ENCODE measurements at regions of chr5 and their contacts with region 1.

Region 1: DNA sequence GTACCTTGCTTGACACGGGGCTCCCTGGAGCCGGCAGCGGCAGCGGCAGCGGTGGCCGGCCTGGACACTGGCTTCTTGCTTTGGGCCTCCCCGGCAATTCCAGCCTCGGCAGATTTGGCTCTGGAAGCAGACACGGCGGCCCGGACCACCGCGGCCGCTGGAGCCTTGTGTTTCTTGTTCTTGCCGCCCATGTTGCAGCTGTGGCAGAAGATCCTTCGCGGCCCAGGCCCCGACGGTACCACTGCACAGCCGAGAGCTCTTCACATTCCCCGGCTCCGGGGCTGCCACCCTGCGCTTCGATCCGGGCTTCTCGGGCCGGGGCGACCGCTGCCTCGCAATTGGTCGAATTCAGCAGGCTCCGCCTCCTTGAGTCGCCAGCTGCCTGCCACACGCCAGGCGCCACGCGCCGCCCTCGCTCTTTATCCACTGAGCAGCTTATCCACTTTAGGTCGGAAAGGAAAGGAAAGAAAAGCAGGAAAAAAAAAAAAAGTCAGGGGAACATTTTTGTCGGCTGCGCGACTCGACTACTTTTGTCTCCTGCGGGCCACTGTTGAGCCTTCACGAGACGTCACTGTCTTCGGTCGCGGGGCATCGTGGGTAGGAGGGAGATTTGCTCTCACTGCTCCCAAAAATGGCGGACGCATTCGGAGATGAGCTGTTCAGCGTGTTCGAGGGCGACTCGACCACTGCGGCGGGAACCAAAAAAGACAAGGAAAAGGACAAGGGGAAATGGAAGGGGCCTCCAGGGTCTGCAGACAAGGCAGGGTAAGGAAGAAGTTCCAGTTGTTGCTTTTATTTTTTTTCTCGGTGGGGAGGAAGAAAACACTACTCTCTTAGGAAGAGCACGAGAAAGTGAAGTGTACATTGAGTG is at the starts of genes DHX29 and MTREX:
- DNase-seq: peak; percentile 93 to 95
- H3K4me3 ChIP-seq: peak within 1 kb of the TSS; percentile 70
- H3K4me3 Mint-ChIP-seq: no peak within 1 kb of the TSS
- H3K27ac Mint-ChIP-seq: no peak within 1 kb of the TSS
- H3K4me1 ChIP-seq: peaks cover 22% of the 10 kb centered on the region
- H3K4me1 Mint-ChIP-seq: peaks cover 7% of the 10 kb centered on the region
- H3K27me3 ChIP-seq: no peaks in the 10 kb centered on the region
- H3K27me3 Mint-ChIP-seq: no peaks in the 10 kb centered on the region
- CTCF ChIP-seq: no peak
- total RNA-seq, gene DHX29: 27.6 and 31.6 TPM in 2 replicates
- total RNA-seq, gene MTREX: 83.7 and 95.2 TPM in 2 replicates

Region 2: GRCh38 chr5:55172051-55172899 is 135.3 kb before region 1 on chr5:
- CTCF ChIA-PET with region 1: no interaction called
- POLR2A ChIA-PET with region 1: interaction called, 7 read pairs
- intact Hi-C with region 1: loop called (anchors 5 kb)
- DNase-seq: peak; percentile 65 to 75
- H3K4me3 ChIP-seq: peak overlapping the region; percentile 50
- H3K4me3 Mint-ChIP-seq: peak overlapping the region; percentile 89
- H3K27ac Mint-ChIP-seq: no peak overlapping the region
- H3K4me1 ChIP-seq: peaks cover 11% of the 10 kb centered on the region
- H3K4me1 Mint-ChIP-seq: peaks cover 8% of the 10 kb centered on the region
- H3K27me3 ChIP-seq: peaks cover 3% of the 10 kb centered on the region
- H3K27me3 Mint-ChIP-seq: peaks cover 12% of the 10 kb centered on the region
- CTCF ChIP-seq: peak; percentile 73 to 74

Region 3: GRCh38 chr5:55187370-55187769 is 120.2 kb before region 1 on chr5:
- CTCF ChIA-PET with region 1: interaction called, 11 read pairs
- POLR2A ChIA-PET with region 1: interaction called, 7 read pairs
- intact Hi-C with region 1: no loop called
- DNase-seq: peak in 1 of 2 experiments; percentile 25
- H3K4me3 ChIP-seq: no peak overlapping the region
- H3K4me3 Mint-ChIP-seq: no peak overlapping the region
- H3K27ac Mint-ChIP-seq: no peak overlapping the region
- H3K4me1 ChIP-seq: peaks cover 6% of the 10 kb centered on the region; the same call in 1 of the 2 replicates
- H3K4me1 Mint-ChIP-seq: peaks cover 6% of the 10 kb centered on the region
- H3K27me3 ChIP-seq: peaks cover 4% of the 10 kb centered on the region
- H3K27me3 Mint-ChIP-seq: peaks cover 23% of the 10 kb centered on the region
- CTCF ChIP-seq: peak; percentile 32 to 49

Region 4: DNA sequence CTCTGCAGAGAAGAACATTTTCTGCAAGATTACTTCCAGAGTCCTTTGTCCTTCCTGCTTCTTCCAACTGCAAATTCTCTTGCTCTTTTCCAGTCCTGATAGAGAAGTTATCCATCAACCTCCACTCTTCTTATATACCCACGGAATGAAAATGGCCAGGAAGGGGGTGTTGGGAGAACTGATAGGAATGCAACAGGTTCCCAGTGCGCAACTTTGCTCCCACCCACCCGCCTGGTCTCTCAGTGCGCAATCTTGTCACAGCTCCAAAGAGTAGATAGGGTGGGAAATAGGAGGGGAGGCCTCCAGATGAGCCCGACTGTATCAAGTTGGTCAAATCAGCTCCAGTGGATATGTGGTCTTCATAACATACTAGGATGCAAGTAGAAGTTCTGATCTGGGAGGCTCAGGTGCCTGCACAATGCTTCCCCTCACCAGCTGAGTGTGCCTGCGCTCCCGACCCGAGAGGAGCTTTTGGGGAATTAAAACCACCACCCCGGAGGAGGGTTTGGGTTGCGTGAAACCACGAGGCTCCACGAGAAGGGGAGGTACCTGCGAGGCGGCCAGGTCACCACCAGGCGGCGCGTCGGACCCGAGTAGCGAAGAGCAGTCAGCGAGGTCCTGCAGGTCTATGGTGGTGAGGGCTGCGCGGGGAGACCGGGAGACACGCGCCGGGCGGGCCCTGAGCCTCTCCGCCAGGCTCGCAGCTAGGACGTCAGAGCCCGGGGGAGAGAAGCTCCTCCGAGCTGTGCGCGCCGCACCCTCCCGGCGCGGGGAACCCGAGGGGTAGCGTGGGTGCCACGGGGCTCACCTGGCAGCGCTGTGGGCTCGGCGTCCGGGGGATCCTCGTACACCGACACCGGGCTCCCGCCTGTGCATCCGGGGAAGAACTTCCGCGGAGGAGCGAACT is 81.3 kb before region 1 on chr5:
- CTCF ChIA-PET with region 1: interaction called, 4 read pairs
- POLR2A ChIA-PET with region 1: interaction called, 3 read pairs
- intact Hi-C with region 1: loop called (anchors 2 kb)
- DNase-seq: peak; percentile 86 to 89
- H3K4me3 ChIP-seq: peak overlapping the region; percentile 82
- H3K4me3 Mint-ChIP-seq: peak overlapping the region; percentile 87
- H3K27ac Mint-ChIP-seq: no peak overlapping the region
- H3K4me1 ChIP-seq: no peaks in the 10 kb centered on the region
- H3K4me1 Mint-ChIP-seq: peaks cover 10% of the 10 kb centered on the region
- H3K27me3 ChIP-seq: peaks cover 3% of the 10 kb centered on the region
- H3K27me3 Mint-ChIP-seq: no peaks in the 10 kb centered on the region
- CTCF ChIP-seq: peak; percentile 83 to 91

Region 5: DNA sequence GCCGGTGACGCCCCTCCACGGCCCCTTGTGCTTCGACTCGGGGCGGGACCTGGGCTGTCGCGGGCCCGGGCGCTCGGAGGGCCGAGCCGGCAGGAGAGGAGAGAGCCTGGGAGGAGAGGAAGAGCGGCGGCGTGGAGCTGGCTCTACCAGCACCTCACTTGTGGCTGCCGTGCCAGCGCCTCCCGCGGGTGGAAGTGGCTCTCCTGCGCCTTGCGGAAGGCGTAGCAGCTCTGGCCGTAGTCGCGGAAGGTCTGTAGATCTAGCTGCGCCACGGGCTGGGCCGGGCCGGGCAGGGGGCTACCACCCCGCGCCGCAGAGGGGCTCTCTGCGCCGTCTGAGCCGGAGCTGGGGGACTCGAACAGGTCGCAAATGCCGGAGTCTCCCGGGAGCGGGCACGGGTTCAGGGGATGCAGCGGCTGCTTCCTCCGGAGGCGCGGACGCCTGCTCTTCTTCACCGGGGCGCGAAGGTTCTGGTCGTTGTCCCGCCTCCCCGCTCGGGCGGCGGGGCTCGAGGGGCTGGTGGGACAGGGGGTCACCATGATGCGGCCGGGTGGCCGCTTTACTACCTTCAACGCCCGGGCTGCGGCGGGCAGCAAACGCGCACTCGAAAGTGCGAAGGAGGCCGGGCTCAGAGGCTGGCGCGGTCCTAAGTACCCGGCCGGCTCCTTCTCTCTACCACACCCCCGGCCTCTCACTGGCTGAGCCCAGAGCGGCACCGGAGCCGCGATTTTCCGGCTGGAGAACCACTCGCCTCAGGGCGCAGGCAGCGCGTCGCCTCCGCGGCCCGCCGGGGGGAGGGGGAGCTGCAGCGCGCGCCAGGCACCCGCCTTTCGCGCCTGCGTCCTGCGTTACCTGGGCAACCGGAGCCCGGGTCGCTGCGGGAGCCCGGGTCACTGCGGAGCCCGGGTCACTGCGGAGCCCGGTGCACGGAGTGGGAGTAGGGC is 74.4 kb before region 1 on chr5 and contains the start of gene CCNO:
- CTCF ChIA-PET with region 1: interaction called, 3 read pairs
- POLR2A ChIA-PET with region 1: interaction called, 13 read pairs
- intact Hi-C with region 1: no loop called
- DNase-seq: peak; percentile 84 to 85
- H3K4me3 ChIP-seq: peak within 1 kb of the TSS; percentile 57
- H3K4me3 Mint-ChIP-seq: peak within 1 kb of the TSS; percentile 90
- H3K27ac Mint-ChIP-seq: peak within 1 kb of the TSS; percentile 53
- H3K4me1 ChIP-seq: peaks cover 7% of the 10 kb centered on the region
- H3K4me1 Mint-ChIP-seq: peaks cover 3% of the 10 kb centered on the region
- H3K27me3 ChIP-seq: peaks cover 4% of the 10 kb centered on the region
- H3K27me3 Mint-ChIP-seq: no peaks in the 10 kb centered on the region
- CTCF ChIP-seq: peak in 1 of 2 experiments; percentile 1
- total RNA-seq, gene CCNO: 3.1 and 3.9 TPM in 2 replicates

Region 6: GRCh38 chr5:55250064-55250463 is 57.6 kb before region 1 on chr5:
- CTCF ChIA-PET with region 1: no interaction called
- POLR2A ChIA-PET with region 1: no interaction called
- intact Hi-C with region 1: no loop called
- DNase-seq: no peak
- H3K4me3 ChIP-seq: no peak overlapping the region
- H3K4me3 Mint-ChIP-seq: no peak overlapping the region
- H3K27ac Mint-ChIP-seq: no peak overlapping the region
- H3K4me1 ChIP-seq: peaks cover 17% of the 10 kb centered on the region
- H3K4me1 Mint-ChIP-seq: peaks cover 8% of the 10 kb centered on the region
- H3K27me3 ChIP-seq: no peaks in the 10 kb centered on the region
- H3K27me3 Mint-ChIP-seq: no peaks in the 10 kb centered on the region
- CTCF ChIP-seq: no peak

Region 7: GRCh38 chr5:55459572-55459971 is 152.0 kb after region 1 on chr5:
- CTCF ChIA-PET with region 1: no interaction called
- POLR2A ChIA-PET with region 1: interaction called, 16 read pairs
- intact Hi-C with region 1: no loop called
- DNase-seq: no peak
- H3K4me3 ChIP-seq: no peak overlapping the region
- H3K4me3 Mint-ChIP-seq: no peak overlapping the region
- H3K27ac Mint-ChIP-seq: no peak overlapping the region
- H3K4me1 ChIP-seq: no peaks in the 10 kb centered on the region
- H3K4me1 Mint-ChIP-seq: no peaks in the 10 kb centered on the region
- H3K27me3 ChIP-seq: no peaks in the 10 kb centered on the region
- H3K27me3 Mint-ChIP-seq: no peaks in the 10 kb centered on the region
- CTCF ChIP-seq: no peak

Measured in Caco-2 (cell line).